CD4-positive, alpha-beta T cell (primary cell): ENCODE measurements at regions of chr14 and their contacts with region 1.

Region 1: DNA sequence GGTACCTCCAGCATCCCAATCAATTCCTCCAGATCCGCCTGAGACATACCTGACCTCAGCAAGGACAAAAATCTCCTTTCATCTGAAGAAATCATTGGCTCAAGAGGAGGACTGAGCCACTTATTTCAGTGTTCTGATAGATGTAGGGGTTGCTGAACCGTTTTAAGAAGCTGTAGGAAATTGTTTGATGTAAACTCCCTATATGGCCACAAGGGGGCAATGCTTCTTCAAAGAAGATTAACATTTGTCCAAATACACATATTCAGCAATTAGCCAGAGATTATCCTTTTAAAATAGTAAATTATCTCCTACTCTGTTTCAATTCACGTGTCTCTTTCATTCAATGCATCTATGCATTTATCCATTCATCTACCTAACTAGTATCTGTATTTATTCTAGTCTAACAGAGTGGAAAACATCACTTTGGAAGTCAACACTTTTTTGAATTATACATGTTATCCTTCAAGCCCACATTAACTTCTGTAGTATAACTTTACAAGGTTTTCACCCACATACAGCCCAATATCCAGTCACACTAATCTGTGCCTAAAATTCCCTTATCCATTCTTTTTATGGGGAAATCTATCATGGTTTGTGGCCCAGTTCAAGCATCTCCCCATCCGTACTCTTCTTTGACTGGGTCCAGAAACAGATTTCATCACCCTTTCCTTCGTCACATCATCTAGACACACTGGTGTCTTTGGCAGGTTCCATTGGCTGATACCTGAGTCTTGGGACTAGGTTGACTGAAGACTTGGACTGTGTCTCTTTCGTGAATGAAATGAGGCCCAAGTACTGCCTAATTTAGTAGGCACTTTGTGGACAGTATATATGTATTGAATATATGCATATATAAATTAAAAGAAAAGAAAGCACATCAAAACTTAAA is 411.0 kb upstream of the OR4E1 start:
- DNase-seq: peak in 5 of 14 experiments; percentile 5 to 73 (median 60)
- ATAC-seq: peak; percentile 51
- H3K4me3 ChIP-seq: no peak overlapping the region
- H3K4me3 Mint-ChIP-seq: peak overlapping the region; percentile 23
- H3K27ac ChIP-seq: no peak overlapping the region
- H3K27ac Mint-ChIP-seq: peak overlapping the region; percentile 35
- H3K4me1 ChIP-seq: peaks cover 2% of the 10 kb centered on the region
- H3K4me1 Mint-ChIP-seq: peaks cover 31% of the 10 kb centered on the region
- H3K27me3 ChIP-seq: no peaks in the 10 kb centered on the region
- H3K27me3 Mint-ChIP-seq: no peaks in the 10 kb centered on the region
- CTCF ChIP-seq: peak; percentile 55

Region 2: GRCh38 chr14:21121106-21121505 is 963.5 kb before region 1 on chr14:
- CTCF ChIA-PET with region 1: no interaction called
- POLR2A ChIA-PET with region 1: no interaction called
- intact Hi-C with region 1: no loop called
- DNase-seq: no peak
- ATAC-seq: no peak
- H3K4me3 ChIP-seq: no peak overlapping the region
- H3K4me3 Mint-ChIP-seq: no peak overlapping the region
- H3K27ac ChIP-seq: no peak overlapping the region
- H3K27ac Mint-ChIP-seq: no peak overlapping the region
- H3K4me1 ChIP-seq: no peaks in the 10 kb centered on the region
- H3K4me1 Mint-ChIP-seq: no peaks in the 10 kb centered on the region
- H3K27me3 ChIP-seq: peaks cover 3 to 9% of the 10 kb centered on the region in 2 experiments
- H3K27me3 Mint-ChIP-seq: peaks cover 51% of the 10 kb centered on the region
- CTCF ChIP-seq: no peak

Region 3: DNA sequence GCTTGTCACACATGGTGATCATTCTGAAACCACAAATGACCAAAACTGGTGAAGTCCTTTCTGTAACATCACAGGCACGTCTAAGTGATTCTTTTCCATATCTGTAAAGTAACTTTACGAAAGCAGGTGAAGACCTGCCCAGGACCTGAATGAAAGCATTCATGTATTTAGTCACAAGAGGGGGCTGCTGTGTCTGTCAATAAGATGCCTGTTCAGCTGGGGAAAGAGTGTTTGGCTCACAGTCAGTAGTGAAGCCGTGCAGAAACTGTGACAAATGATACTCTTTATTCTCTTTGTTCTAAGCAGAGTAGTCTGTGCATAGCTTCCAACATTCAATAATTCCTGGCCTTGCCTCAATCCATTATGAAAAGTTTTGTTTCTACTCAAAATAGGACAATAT is 37.5 kb before region 1 on chr14:
- CTCF ChIA-PET with region 1: no interaction called
- POLR2A ChIA-PET with region 1: interaction called, 3 read pairs
- intact Hi-C with region 1: loop called (anchors 1 to 5 kb)
- DNase-seq: peak in 8 of 14 experiments; percentile 11 to 76 (median 42)
- ATAC-seq: peak; percentile 93
- H3K4me3 ChIP-seq: no peak overlapping the region
- H3K4me3 Mint-ChIP-seq: peak overlapping the region; percentile 59
- H3K27ac ChIP-seq: no peak overlapping the region
- H3K27ac Mint-ChIP-seq: peak overlapping the region; percentile 81
- H3K4me1 ChIP-seq: peaks cover 3% of the 10 kb centered on the region
- H3K4me1 Mint-ChIP-seq: peaks cover 33% of the 10 kb centered on the region
- H3K27me3 ChIP-seq: no peaks in the 10 kb centered on the region
- H3K27me3 Mint-ChIP-seq: peaks cover 3% of the 10 kb centered on the region
- CTCF ChIP-seq: peak; percentile 47

Region 4: DNA sequence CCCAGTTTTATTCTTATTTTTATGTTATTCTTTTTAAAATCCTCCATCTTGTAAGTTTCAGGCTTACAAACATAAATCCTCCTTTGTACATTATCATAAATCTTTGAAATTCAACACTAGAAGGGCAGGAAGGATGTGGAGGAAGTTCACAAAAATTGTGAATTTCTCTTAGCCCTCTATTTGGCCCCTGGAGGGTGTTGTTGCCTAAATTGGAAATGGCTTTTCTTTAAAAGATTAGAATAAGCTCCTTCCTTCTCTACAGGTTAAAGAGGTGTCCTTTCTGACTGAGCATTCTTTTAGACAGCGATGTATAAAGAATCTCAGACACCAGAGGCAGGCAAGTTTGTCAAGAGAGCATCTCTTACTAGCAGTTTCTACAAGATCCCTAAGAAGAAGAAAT is 19.3 kb before region 1 on chr14:
- CTCF ChIA-PET with region 1: interaction called, 3 read pairs
- POLR2A ChIA-PET with region 1: interaction called, 9 read pairs
- intact Hi-C with region 1: loop called in 1 of 2 experiments (anchors 2 kb)
- DNase-seq: peak in 1 of 14 experiments; percentile 23
- ATAC-seq: peak; percentile 35
- H3K4me3 ChIP-seq: no peak overlapping the region
- H3K4me3 Mint-ChIP-seq: peak overlapping the region; percentile 4
- H3K27ac ChIP-seq: no peak overlapping the region
- H3K27ac Mint-ChIP-seq: peak overlapping the region; percentile 73
- H3K4me1 ChIP-seq: peaks cover 11% of the 10 kb centered on the region
- H3K4me1 Mint-ChIP-seq: peaks cover 38% of the 10 kb centered on the region
- H3K27me3 ChIP-seq: no peaks in the 10 kb centered on the region
- H3K27me3 Mint-ChIP-seq: no peaks in the 10 kb centered on the region
- CTCF ChIP-seq: peak; percentile 18